GM23248 (cell line): ENCODE measurements at regions of chr18 and their contacts with region 1.

Region 1: GRCh38 chr18:33839441-33840211 is 261.6 kb downstream of the ASXL3 start:
- DNase-seq: peak; percentile 46
- H3K4me3 ChIP-seq: no peak overlapping the region
- H3K27ac ChIP-seq: no peak overlapping the region
- H3K4me1 ChIP-seq: no peaks in the 10 kb centered on the region
- H3K27me3 ChIP-seq: no peaks in the 10 kb centered on the region

Region 2: DNA sequence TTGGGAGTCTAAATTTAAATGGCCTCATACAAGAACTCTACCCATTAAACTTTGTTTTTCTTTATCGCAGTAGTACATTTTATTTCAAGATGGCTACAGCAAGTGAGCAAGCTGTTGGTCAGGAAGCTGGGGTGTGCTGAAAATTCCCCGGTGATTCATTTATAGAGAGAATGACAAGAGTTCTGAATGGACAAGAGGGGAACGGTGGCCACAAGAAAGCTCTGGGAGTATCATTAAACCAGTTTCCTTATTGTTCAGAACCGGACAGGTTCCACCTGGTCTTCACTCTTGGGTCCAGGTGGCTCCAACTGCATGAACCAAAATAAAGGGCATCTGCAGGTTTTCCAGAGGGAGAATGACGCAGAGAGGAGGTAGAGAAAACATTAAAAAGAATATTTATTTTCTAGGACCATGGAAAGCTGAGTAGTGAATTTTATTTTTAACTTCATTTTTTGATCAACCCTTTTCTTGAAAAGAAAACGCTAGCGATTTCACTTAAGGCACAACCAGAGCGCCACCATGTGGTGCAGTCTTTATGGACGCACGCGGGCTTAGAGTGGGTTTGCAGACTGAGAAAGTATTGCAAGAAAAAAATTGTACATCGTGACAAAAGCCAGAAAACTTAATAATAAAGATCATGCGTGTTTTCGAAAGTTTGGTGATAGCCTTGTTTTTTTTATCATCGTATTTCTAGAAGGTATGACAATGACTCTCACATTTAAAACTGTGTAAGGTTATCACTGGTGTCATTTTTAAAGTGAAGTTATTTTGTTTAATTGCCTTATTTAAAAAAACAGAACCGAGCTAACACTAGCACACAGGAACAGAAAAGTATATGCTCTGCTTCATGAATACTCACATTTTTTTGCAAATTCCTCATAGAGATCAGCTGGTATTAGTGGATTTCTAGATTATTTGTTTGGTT is 483.0 kb after region 1 on chr18:
- in situ Hi-C with region 1: loop called (anchors 25 kb)
- DNase-seq: peak; percentile 81
- H3K4me3 ChIP-seq: no peak overlapping the region
- H3K27ac ChIP-seq: no peak overlapping the region
- H3K4me1 ChIP-seq: no peaks in the 10 kb centered on the region
- H3K27me3 ChIP-seq: no peaks in the 10 kb centered on the region